Calu3 (cell line): ENCODE measurements at regions of chr5 and their contacts with region 1.

Region 1: GRCh38 chr5:54895816-54896341 is 89.5 kb downstream of the ESM1 start:
- DNase-seq: peak; percentile 34
- H3K4me3 Mint-ChIP-seq: peak overlapping the region; percentile 21
- H3K27ac Mint-ChIP-seq: no peak overlapping the region
- H3K4me1 Mint-ChIP-seq: peaks cover 8% of the 10 kb centered on the region
- H3K27me3 Mint-ChIP-seq: peaks cover 51% of the 10 kb centered on the region
- CTCF ChIP-seq: peak; percentile 35

Region 2: GRCh38 chr5:54610197-54610944 is 285.5 kb before region 1 on chr5:
- CTCF ChIA-PET with region 1: no interaction called
- intact Hi-C with region 1: no loop called
- DNase-seq: no peak
- H3K4me3 Mint-ChIP-seq: no peak overlapping the region
- H3K27ac Mint-ChIP-seq: no peak overlapping the region
- H3K4me1 Mint-ChIP-seq: peaks cover 8% of the 10 kb centered on the region
- H3K27me3 Mint-ChIP-seq: no peaks in the 10 kb centered on the region
- CTCF ChIP-seq: no peak

Region 3: GRCh38 chr5:54852007-54852406 is 43.9 kb before region 1 on chr5:
- CTCF ChIA-PET with region 1: interaction called, 3 read pairs
- intact Hi-C with region 1: loop called (anchors 5 kb)
- DNase-seq: no peak
- H3K4me3 Mint-ChIP-seq: no peak overlapping the region
- H3K27ac Mint-ChIP-seq: no peak overlapping the region
- H3K4me1 Mint-ChIP-seq: no peaks in the 10 kb centered on the region
- H3K27me3 Mint-ChIP-seq: peaks cover 2% of the 10 kb centered on the region
- CTCF ChIP-seq: no peak

Region 4: GRCh38 chr5:54867310-54867944 is 28.5 kb before region 1 on chr5:
- CTCF ChIA-PET with region 1: interaction called, 12 read pairs
- intact Hi-C with region 1: no loop called
- DNase-seq: no peak
- H3K4me3 Mint-ChIP-seq: no peak overlapping the region
- H3K27ac Mint-ChIP-seq: no peak overlapping the region
- H3K4me1 Mint-ChIP-seq: peaks cover 2% of the 10 kb centered on the region
- H3K27me3 Mint-ChIP-seq: peaks cover 46% of the 10 kb centered on the region
- CTCF ChIP-seq: peak; percentile 41

Region 5: DNA sequence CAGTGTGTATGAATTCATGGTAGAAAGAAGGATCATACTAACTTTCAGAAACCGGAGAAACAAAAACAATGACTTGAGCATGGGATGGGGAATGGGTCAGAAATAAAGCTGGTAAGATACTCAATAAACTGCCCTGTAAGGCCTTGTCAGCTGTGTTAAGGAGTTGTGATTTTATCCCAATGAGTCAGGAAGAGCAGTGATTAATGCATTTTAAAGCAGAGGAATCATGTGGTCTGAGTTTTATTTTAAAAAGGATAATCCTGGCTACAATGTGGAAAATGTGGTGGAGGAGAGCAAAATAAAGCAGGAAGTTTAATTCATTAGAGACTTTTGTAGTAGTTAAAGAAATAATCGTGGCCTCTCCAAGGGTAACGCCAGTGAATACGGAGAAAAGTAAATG is 382.9 kb after region 1 on chr5:
- CTCF ChIA-PET with region 1: no interaction called
- intact Hi-C with region 1: no loop called
- DNase-seq: no peak
- H3K4me3 Mint-ChIP-seq: no peak overlapping the region
- H3K27ac Mint-ChIP-seq: no peak overlapping the region
- H3K4me1 Mint-ChIP-seq: no peaks in the 10 kb centered on the region
- H3K27me3 Mint-ChIP-seq: no peaks in the 10 kb centered on the region
- CTCF ChIP-seq: no peak